Activated CD4-positive, alpha-beta memory T cell treated with anti-CD3 and anti-CD28 coated beads for 36 hours (primary cell): ENCODE measurements at regions of chr4 and their contacts with region 1.

Region 1: DNA sequence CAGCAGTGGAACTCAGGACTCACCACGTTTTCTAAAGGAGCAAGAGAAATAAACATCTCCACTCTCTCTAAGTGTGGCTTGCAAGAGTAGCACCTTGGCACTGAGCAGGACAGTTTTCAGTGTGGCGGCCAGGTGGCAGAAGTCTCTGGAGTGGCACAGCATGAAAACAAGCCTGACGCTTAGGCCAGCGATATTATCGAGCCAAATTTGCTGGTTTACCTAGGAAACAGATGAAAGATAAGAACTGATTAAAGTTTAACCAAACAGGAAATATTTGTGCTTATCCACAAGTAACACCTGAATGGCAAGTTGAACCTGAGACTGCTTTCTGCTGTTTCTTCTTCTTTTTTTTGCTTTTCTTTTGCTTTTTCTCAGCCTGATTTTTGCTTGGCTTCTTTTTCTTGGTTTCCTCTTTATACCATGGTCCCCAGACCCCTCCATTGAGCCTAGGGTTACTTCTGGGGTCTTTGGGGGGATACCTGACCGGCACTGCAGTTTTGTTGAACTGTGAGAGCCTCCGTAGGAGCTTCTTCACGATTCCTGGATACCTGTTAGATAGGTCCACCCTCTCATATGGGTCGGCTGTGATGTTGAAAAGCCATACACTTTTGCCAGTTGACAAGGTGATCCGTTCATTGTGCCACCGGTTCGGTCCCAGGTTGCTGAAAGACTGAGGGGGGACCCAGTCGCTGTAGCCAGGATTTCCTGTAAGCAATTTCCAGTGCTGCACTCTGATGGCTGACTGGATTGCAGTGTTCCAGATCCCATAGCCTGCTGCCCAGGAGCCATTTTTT is 77.3 kb downstream of the ARSJ start:
- DNase-seq: peak; percentile 80
- H3K4me3 Mint-ChIP-seq: peak overlapping the region; percentile 76
- H3K27ac Mint-ChIP-seq: peak overlapping the region; percentile 68
- H3K4me1 Mint-ChIP-seq: peaks cover 62% of the 10 kb centered on the region
- H3K27me3 Mint-ChIP-seq: no peaks in the 10 kb centered on the region

Region 2: DNA sequence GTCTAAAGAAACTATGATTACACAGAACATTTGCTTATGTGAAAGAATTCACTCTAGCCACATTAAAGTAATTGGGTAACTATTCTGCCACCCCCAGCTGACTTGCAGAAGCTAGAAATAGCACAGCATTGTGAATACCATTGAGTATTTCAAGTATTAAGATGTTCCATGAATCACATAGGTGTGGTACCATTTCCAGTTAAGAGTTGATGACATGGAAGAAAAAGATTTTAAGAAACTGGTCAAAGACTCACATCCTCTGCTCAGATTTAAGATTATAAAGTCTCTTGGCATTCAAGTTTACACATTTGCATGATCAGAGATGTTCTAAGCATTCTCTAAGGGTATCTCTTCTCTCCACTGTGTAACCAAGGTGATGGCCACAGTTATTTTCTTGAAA is 428.2 kb before region 1 on chr4:
- CTCF ChIA-PET with region 1: no interaction called
- POLR2A ChIA-PET with region 1: no interaction called
- intact Hi-C with region 1: loop called (anchors 10 kb)
- DNase-seq: peak; percentile 39
- H3K4me3 Mint-ChIP-seq: no peak overlapping the region
- H3K27ac Mint-ChIP-seq: peak overlapping the region; percentile 84
- H3K4me1 Mint-ChIP-seq: peaks cover 51% of the 10 kb centered on the region
- H3K27me3 Mint-ChIP-seq: no peaks in the 10 kb centered on the region

Region 3: GRCh38 chr4:113781439-113782040 is 120.7 kb before region 1 on chr4:
- CTCF ChIA-PET with region 1: no interaction called
- POLR2A ChIA-PET with region 1: no interaction called
- intact Hi-C with region 1: loop called (anchors 5 kb)
- DNase-seq: no peak
- H3K4me3 Mint-ChIP-seq: no peak overlapping the region
- H3K27ac Mint-ChIP-seq: no peak overlapping the region
- H3K4me1 Mint-ChIP-seq: peaks cover 16% of the 10 kb centered on the region
- H3K27me3 Mint-ChIP-seq: no peaks in the 10 kb centered on the region

Region 4: GRCh38 chr4:113823291-113823659 is 78.9 kb before region 1 on chr4:
- CTCF ChIA-PET with region 1: no interaction called
- POLR2A ChIA-PET with region 1: no interaction called
- intact Hi-C with region 1: loop called (anchors 5 kb)
- DNase-seq: peak; percentile 18
- H3K4me3 Mint-ChIP-seq: no peak overlapping the region
- H3K27ac Mint-ChIP-seq: no peak overlapping the region
- H3K4me1 Mint-ChIP-seq: peaks cover 45% of the 10 kb centered on the region
- H3K27me3 Mint-ChIP-seq: no peaks in the 10 kb centered on the region

Region 5: GRCh38 chr4:113869743-113870375 is 32.3 kb before region 1 on chr4:
- CTCF ChIA-PET with region 1: interaction called, 3 read pairs
- POLR2A ChIA-PET with region 1: no interaction called
- intact Hi-C with region 1: loop called (anchors 2 kb)
- DNase-seq: peak; percentile 66
- H3K4me3 Mint-ChIP-seq: no peak overlapping the region
- H3K27ac Mint-ChIP-seq: peak overlapping the region; percentile 76
- H3K4me1 Mint-ChIP-seq: peaks cover 11% of the 10 kb centered on the region
- H3K27me3 Mint-ChIP-seq: no peaks in the 10 kb centered on the region